Left ventricle myocardium superior (tissue), 1 donor: ENCODE measurements at regions of chr21 and their contacts with region 1.

Region 1: GRCh38 chr21:39263372-39263771 is 50.1 kb downstream of the BRWD1 start:
- DNase-seq: no peak
- ATAC-seq: no peak

Region 2: GRCh38 chr21:39204134-39204533 is 59.2 kb before region 1 on chr21:
- intact Hi-C with region 1: no loop called
- DNase-seq: no peak
- ATAC-seq: no peak

Region 3: GRCh38 chr21:39217356-39218081 is 45.9 kb before region 1 on chr21:
- intact Hi-C with region 1: loop called (anchors 10 kb)
- DNase-seq: no peak
- ATAC-seq: no peak

Region 4: DNA sequence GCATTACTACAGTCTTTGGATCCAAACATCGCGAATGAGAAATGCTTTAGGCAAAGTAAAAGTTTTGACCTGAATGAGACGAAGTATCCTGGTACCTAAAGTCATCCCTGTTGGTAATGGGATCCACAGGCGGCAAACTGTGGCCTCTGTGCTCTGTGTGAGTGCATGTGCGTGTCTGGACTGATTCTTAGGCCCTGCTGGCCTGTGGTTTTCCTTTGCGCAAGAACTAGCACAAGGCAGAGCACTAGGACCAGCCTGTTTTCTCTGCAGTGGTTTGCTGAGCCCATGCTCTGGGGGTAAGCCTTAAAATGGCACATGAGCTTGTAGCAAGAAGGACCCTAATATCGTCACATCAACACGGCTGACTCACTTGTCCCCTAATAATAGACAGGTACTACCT is 1332.4 kb after region 1 on chr21:
- intact Hi-C with region 1: no loop called
- DNase-seq: no peak
- ATAC-seq: no peak